ENCODE measurements at regions of chr9 and their contacts with region 1.

Region 1: DNA sequence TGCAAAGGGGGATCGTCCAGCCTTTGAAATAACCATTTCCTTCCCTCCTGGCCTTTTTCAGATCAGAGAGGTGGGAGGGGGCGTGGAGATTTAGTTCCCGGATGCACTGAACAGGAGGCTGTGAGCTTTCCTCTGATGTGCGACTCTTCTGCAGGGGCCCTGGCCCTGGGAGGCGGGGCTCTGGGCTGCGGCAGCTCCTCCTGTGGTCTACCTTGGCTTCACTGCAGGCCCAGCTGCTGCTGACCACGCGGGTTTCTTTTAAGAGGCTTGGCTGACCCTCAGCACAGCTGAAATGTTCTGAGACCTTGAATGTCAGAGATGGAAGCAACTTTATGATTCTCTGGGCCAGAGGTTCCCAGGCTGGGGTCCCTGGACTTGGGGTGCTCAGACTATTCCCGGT is 27.0 kb upstream of the COL15A1 start:
- DNase-seq: peak; percentile 79 to 88 (median 82)
- ATAC-seq: peak; percentile 98
- H3K4me3 ChIP-seq: no peak overlapping the region
- H3K27ac ChIP-seq: peak overlapping the region; percentile 44
- H3K4me1 ChIP-seq: peaks cover 16 to 21% of the 10 kb centered on the region in 2 experiments
- H3K27me3 ChIP-seq: no peaks in the 10 kb centered on the region
- CTCF ChIP-seq: peak; percentile 15 to 25 (median 23); a peak in 1 of 6 replicates
- EP300 ChIP-seq: 0 out of 2 replicates have a peak, but pooled peaks have one; percentile 7
- POLR2A ChIP-seq: no peak
- RAD21 ChIP-seq: peak in 1 of 2 experiments; percentile 34; a peak in 2 of 4 replicates

Region 2: DNA sequence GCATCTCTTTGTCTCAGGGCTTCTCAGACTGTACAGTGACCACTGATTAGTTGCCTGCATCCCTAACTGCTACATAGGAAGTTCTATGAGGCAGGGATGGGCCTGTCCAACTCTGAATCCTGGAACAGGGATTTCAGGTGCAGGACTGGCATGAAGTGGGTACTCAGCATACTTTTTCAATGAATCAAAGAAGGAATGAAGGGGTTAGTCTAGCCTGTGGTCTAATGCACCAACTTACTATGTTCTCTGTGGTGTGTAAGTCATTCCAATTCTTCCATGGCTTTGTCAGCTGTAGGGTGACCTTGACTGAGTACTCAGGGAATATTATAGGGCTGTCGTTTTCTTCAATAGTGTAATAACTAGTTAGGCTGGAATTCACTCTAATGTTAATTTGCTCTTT is 35.3 kb after region 1 on chr9:
- CTCF ChIA-PET with region 1: no interaction called
- POLR2A ChIA-PET with region 1: no interaction called
- in situ Hi-C with region 1: no loop called
- intact Hi-C with region 1: no loop called
- DNase-seq: no peak
- ATAC-seq: no peak
- H3K4me3 ChIP-seq: no peak overlapping the region
- H3K27ac ChIP-seq: no peak overlapping the region
- H3K4me1 ChIP-seq: no peaks in the 10 kb centered on the region
- H3K27me3 ChIP-seq: no peaks in the 10 kb centered on the region
- CTCF ChIP-seq: no peak
- EP300 ChIP-seq: no peak
- POLR2A ChIP-seq: no peak
- RAD21 ChIP-seq: no peak

Region 3: GRCh38 chr9:98974994-98975712 is 58.5 kb after region 1 on chr9:
- CTCF ChIA-PET with region 1: no interaction called
- POLR2A ChIA-PET with region 1: interaction called, 4 read pairs
- in situ Hi-C with region 1: no loop called
- intact Hi-C with region 1: loop called (anchors 5 kb)
- DNase-seq: peak; percentile 88 to 91 (median 90)
- ATAC-seq: peak; percentile 92
- H3K4me3 ChIP-seq: peak overlapping the region; percentile 25; the same call in 1 of the 2 replicates
- H3K27ac ChIP-seq: no peak overlapping the region
- H3K4me1 ChIP-seq: peaks cover 27% of the 10 kb centered on the region in 2 experiments; a peak in 4 of 5 replicates
- H3K27me3 ChIP-seq: no peaks in the 10 kb centered on the region
- CTCF ChIP-seq: peak; percentile 99
- EP300 ChIP-seq: no peak
- POLR2A ChIP-seq: no peak
- RAD21 ChIP-seq: peak; percentile 81 to 90

Region 4: DNA sequence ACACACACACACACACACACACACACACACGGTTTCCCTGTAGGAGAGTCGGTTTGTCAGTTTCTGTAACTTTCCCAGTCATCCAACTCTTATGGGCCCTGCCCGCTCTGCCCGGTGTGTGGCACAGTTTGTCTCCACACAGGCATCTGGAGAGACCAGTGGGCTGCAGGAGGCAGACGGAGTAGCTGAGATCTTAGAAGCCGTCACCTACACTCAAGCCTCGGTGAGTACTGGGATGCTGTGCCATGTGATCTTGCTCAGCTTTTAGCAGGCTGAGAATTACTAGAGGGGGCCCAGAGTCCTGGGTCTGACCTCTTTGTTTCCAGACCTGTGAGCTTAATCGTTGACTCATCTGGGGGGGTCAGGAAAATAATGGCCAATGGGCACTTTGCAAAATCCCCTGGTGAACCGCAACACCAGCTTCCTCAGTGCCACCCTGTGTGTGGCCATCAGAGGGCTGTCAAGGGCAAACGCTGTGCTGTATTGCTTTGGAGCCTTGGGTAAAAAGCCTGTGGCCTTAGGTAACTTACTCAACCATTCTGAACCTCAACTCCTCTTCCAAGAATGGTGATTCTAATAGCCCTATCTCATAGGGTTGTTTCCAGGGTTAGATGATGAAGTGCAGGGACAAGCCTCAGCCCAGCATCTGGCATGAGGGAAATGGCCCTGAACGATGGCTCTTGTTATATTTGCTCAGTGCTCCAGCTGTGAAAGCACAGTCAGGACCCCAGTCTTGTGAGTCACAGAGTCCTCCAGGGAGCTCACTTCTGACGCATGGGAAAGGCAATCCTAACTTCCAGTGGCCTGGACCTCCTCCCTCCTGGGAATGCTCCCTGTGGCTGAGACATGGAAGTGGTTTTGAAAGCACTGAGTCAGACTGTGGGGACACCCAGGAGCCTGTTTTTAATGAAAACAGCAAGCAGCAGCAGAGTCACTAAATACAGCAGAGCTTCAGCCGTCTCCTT is 72.7 kb after region 1 on chr9:
- CTCF ChIA-PET with region 1: no interaction called
- POLR2A ChIA-PET with region 1: no interaction called
- in situ Hi-C with region 1: no loop called
- intact Hi-C with region 1: no loop called
- DNase-seq: no peak
- ATAC-seq: peak; percentile 56; the same call in 1 of the 3 replicates
- H3K4me3 ChIP-seq: no peak overlapping the region
- H3K27ac ChIP-seq: no peak overlapping the region
- H3K4me1 ChIP-seq: peaks cover 0 to 10% of the 10 kb centered on the region in 2 experiments; a peak in 1 of 5 replicates
- H3K27me3 ChIP-seq: no peaks in the 10 kb centered on the region
- CTCF ChIP-seq: no peak
- EP300 ChIP-seq: no peak
- POLR2A ChIP-seq: no peak
- RAD21 ChIP-seq: no peak

Region 5: DNA sequence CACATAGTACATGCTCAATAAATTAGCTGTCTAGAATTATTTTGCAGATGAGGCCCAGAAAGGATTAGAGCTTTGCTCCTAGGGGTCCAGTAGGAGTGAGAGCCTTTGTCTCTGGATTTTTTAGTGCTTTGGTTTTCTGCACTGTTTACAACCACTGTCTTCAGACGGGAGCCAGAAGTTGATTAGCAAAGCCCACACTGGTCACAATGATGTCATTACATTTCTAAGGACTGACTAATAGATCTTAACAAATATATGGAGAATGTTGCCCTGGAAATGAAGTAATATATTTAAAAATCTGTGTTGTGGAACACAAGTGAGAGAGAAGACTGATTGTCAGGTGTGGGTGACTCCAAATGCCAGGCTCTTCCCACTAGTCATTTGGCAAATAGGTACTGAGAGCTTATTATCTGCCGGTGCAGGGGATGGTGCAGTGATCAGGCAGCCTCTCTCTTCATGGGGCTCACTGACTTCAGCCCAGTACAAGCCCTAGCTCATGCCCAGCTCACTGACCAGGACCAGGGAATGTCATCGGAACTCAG is 103.2 kb after region 1 on chr9:
- CTCF ChIA-PET with region 1: no interaction called
- POLR2A ChIA-PET with region 1: no interaction called
- in situ Hi-C with region 1: no loop called
- intact Hi-C with region 1: no loop called
- DNase-seq: no peak
- ATAC-seq: no peak; the same call in 2 of the 3 replicates
- H3K4me3 ChIP-seq: no peak overlapping the region
- H3K27ac ChIP-seq: no peak overlapping the region
- H3K4me1 ChIP-seq: peaks cover 3 to 11% of the 10 kb centered on the region in 2 experiments; a peak in 4 of 5 replicates
- H3K27me3 ChIP-seq: no peaks in the 10 kb centered on the region
- CTCF ChIP-seq: no peak
- EP300 ChIP-seq: no peak
- POLR2A ChIP-seq: no peak
- RAD21 ChIP-seq: no peak